ENCODE measurements at regions of chr11 and their contacts with region 1.

Region 1: GRCh38 chr11:93741094-93741881 is at the starts of genes C11orf54 and TAF1D:
- DNase-seq: peak; percentile 96 to 99
- ATAC-seq: peak; percentile 97 to 99 (median 98)
- H3K4me3 ChIP-seq: peak within 1 kb of the TSS; percentile 49 to 97 (median 78)
- H3K27ac ChIP-seq: peak within 1 kb of the TSS; percentile 72 to 98 (median 90)
- H3K4me1 ChIP-seq: peaks cover 0 to 82% (median 52%) of the 10 kb centered on the region in 9 donors
- H3K27me3 ChIP-seq: no peaks in the 10 kb centered on the region
- CTCF ChIP-seq: peak in 4 of 9 donors; percentile 7 to 20 (median 14)
- total RNA-seq, gene C11orf54: 24.3 to 39.5 (median 27.6) TPM
- total RNA-seq, gene TAF1D: 24.0 to 46.1 (median 31.6) TPM

Region 2: DNA sequence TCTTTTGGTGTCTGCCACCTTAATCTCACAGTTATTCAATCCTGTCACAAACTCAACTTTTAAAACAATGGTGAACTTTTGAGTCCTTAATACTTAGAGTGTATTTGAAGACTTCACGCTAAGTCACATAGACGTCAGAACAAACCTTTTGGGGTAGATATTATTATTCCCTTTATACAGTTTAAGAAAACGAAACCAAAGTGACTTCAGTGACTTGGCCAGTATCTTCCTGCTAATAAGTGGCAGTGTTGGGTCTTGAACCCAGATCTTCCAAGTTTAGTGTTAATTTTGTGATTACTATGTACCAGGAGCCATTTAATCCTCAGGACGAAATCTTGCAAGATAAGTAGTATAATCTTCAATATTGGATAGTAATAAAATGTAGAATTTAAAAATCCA is 79.1 kb before region 1 on chr11:
- intact Hi-C with region 1: loop called in 1 of 10 experiments (anchors 5 kb)
- DNase-seq: no peak
- ATAC-seq: no peak
- H3K4me3 ChIP-seq: peak overlapping the region; percentile 39 to 96 (median 77)
- H3K27ac ChIP-seq: peak overlapping the region in 9 of 10 donors; percentile 45 to 92 (median 67)
- H3K4me1 ChIP-seq: peaks cover 0 to 27% (median 14%) of the 10 kb centered on the region in 9 donors
- H3K27me3 ChIP-seq: no peaks in the 10 kb centered on the region
- CTCF ChIP-seq: no peak

Region 3: GRCh38 chr11:93672280-93672679 is 69.0 kb before region 1 on chr11:
- intact Hi-C with region 1: loop called in 1 of 10 experiments (anchors 10 kb)
- DNase-seq: no peak
- ATAC-seq: no peak
- H3K4me3 ChIP-seq: no peak overlapping the region
- H3K27ac ChIP-seq: no peak overlapping the region
- H3K4me1 ChIP-seq: no peaks in the 10 kb centered on the region
- H3K27me3 ChIP-seq: no peaks in the 10 kb centered on the region
- CTCF ChIP-seq: no peak

Region 4: DNA sequence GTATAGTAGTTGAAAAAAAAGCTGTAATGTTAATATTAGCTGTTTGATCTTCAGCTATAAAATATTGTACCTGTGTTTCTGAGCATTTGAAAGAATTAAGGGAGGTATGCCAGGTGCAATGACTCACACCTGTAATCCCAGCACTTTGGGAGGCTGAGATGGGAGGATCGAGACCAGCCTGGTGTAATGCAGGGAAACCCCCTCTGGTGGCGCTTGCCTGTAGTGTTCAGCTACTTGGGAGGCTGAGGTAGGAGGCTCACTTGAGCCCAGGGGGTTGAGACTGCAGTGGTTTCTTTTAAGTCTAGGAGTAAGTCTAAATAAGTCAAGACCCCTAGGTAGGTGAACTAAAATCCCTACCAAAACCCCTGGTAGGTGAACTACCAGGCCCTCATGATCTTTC is 37.1 kb before region 1 on chr11:
- intact Hi-C with region 1: no loop called
- DNase-seq: no peak
- ATAC-seq: no peak
- H3K4me3 ChIP-seq: no peak overlapping the region
- H3K27ac ChIP-seq: no peak overlapping the region
- H3K4me1 ChIP-seq: peaks cover 0 to 11% (median 0%) of the 10 kb centered on the region in 9 donors
- H3K27me3 ChIP-seq: no peaks in the 10 kb centered on the region
- CTCF ChIP-seq: no peak

Region 5: DNA sequence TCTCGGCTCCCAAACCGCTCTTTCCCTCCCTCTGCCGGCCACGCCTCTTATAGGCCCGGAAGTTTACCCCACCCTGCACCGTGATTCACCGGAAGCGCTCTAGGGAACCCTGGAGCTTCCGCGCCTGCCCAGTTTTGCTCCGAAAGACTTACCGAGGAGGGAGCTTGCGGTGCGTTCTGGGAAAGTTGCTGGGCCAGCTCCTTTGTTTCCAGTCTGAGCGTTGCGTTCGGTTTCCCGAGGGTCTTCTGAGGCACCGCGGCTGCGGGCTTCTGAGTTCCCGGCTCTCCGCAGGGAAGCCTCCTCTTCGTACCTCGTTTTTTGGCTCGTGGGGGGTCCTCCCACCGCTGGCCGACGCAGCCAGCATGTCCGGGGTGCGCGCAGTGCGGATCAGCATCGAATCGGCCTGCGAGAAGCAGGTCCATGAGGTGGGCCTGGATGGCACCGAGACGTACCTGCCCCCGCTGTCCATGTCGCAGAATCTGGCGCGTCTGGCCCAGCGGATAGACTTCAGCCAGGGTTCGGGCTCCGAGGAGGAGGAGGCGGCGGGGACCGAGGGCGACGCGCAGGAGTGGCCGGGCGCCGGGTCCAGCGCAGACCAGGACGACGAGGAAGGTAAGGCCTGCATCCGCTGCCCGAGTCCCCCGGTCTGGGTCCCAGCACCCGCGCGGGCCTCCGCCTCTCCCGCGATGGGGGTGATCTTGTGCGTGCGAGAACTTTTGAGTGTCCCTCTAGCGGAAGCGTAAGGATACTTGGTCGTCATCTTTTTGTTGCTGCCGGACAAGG is 43.1 kb after region 1 on chr11 and contains the start of gene MED17:
- intact Hi-C with region 1: loop called in 7 of 10 experiments (anchors 1 to 5 kb)
- DNase-seq: peak; percentile 90 to 95
- ATAC-seq: peak; percentile 99 to 100 (median 100)
- H3K4me3 ChIP-seq: peak within 1 kb of the TSS; percentile 78 to 99 (median 96)
- H3K27ac ChIP-seq: peak within 1 kb of the TSS; percentile 67 to 98 (median 95)
- H3K4me1 ChIP-seq: peaks cover 7 to 40% (median 34%) of the 10 kb centered on the region in 9 donors
- H3K27me3 ChIP-seq: no peaks in the 10 kb centered on the region
- CTCF ChIP-seq: peak in 7 of 9 donors; percentile 38 to 69 (median 49)
- total RNA-seq, gene MED17: 17.2 to 25.7 (median 22.1) TPM

Measured in heart right ventricle (tissue), 16 donors.